ENCODE measurements at regions of chr12 and their contacts with region 1.

Region 1: GRCh38 chr12:91722072-91722471 is 423.6 kb downstream of the BTG1 start:
- DNase-seq: peak; percentile 50
- H3K4me3 Mint-ChIP-seq: no peak overlapping the region
- H3K27ac Mint-ChIP-seq: peak overlapping the region; percentile 42
- H3K4me1 Mint-ChIP-seq: peaks cover 42% of the 10 kb centered on the region
- H3K27me3 Mint-ChIP-seq: no peaks in the 10 kb centered on the region
- CTCF ChIP-seq: no peak

Region 2: DNA sequence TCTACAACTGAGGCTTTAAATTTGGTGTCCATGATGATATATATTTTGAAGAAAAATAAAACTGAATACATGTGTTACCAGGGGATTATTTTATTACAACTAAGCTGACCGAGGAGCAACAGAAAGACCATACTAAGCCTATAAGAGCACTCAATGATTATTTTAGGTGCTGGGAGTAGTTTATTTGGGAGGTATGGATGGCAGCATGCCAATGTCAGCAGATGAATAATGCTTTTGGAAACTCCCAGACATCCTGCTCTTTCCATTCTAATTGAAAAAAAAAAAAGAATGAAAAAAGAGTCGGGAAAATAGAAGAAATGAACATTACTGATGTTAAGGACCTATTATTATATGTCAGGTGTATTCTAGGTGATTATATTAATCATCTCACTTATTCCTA is 17.6 kb before region 1 on chr12:
- CTCF ChIA-PET with region 1: interaction called, 3 read pairs
- POLR2A ChIA-PET with region 1: interaction called, 53 read pairs
- intact Hi-C with region 1: no loop called
- DNase-seq: peak; percentile 89
- H3K4me3 Mint-ChIP-seq: no peak overlapping the region
- H3K27ac Mint-ChIP-seq: peak overlapping the region; percentile 62
- H3K4me1 Mint-ChIP-seq: peaks cover 26% of the 10 kb centered on the region
- H3K27me3 Mint-ChIP-seq: no peaks in the 10 kb centered on the region
- CTCF ChIP-seq: no peak

Region 3: DNA sequence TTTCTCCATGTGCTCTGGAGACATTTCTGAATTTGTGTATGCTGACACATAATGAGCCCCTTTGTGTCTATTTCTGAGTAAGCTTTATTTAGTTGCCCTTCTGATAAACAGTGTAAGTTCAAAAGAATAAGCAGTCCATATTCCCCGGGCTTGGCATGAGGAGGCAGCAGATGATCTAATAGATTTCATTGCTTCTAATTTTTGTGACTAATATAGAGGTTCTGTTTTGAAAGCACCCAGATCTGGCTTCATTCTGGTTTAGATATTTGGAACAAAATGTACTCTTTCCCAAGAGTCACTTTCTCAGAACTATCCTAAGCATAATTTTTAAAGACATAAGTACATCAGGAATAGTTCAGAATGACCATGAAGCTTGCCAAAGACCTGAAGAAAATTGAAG is 132.7 kb after region 1 on chr12:
- CTCF ChIA-PET with region 1: no interaction called
- POLR2A ChIA-PET with region 1: no interaction called
- intact Hi-C with region 1: no loop called
- DNase-seq: peak; percentile 26
- H3K4me3 Mint-ChIP-seq: peak overlapping the region; percentile 13
- H3K27ac Mint-ChIP-seq: peak overlapping the region; percentile 93
- H3K4me1 Mint-ChIP-seq: peaks cover 41% of the 10 kb centered on the region
- H3K27me3 Mint-ChIP-seq: no peaks in the 10 kb centered on the region
- CTCF ChIP-seq: no peak

Region 4: DNA sequence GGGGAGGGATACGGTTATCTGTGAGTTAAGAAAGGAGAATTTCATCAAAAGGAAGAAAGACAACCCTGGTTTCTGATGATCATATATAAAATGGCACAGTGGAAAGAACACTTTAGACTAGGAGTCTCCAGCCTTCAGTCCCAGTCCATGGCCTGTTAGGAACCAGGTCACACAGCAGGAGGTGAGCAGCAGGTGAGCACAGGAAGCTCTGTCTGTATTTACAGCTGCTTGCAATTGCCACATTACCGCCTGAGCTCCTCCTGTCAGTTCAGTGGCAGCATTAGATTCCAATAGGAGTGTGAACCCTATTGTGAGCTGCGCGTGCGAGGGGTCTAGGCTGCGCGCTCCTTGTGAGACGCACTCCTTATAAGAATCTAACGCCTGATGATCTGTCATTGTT is 285.7 kb after region 1 on chr12:
- CTCF ChIA-PET with region 1: no interaction called
- POLR2A ChIA-PET with region 1: no interaction called
- intact Hi-C with region 1: no loop called
- DNase-seq: no peak
- H3K4me3 Mint-ChIP-seq: no peak overlapping the region
- H3K27ac Mint-ChIP-seq: no peak overlapping the region
- H3K4me1 Mint-ChIP-seq: no peaks in the 10 kb centered on the region
- H3K27me3 Mint-ChIP-seq: no peaks in the 10 kb centered on the region
- CTCF ChIP-seq: peak; percentile 6